ENCODE measurements at regions of chr20 and their contacts with region 1.

Region 1: DNA sequence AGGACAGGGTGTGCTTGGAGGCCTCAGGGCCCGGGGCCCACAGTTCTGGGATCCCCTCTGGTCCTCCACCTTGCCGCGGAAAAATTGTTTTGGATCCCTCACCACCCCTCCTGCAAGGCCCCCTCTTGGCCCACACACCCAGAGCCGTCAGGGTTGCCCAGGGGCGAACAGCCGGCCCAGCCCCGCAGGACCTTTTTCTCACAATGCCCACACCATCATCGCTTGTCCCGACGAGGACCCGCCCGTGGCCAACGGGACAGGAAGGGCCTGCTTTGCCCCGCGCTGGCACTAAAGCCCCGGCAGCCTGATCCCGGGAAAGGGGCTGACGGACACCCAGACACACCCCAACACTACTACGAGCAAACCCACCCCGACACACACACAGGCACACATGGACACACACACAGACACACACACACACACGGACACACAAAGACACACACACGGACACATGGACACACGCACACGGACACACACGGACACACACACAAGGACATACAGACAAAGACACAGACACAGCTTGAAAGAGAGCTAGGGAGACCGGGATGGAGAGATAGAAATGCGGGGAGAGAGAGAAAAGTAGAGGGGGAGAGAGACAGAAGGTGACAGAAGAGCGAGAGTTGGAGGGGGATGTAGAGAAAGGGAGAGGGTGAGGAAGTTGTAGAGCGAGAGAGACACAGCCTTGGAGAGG is 1493.5 kb upstream of the DEFB115 start:
- DNase-seq: no peak
- H3K4me3 ChIP-seq: no peak overlapping the region
- H3K4me3 Mint-ChIP-seq: no peak overlapping the region
- H3K27ac Mint-ChIP-seq: no peak overlapping the region
- H3K4me1 ChIP-seq: no peaks in the 10 kb centered on the region
- H3K4me1 Mint-ChIP-seq: no peaks in the 10 kb centered on the region
- H3K27me3 ChIP-seq: no peaks in the 10 kb centered on the region
- H3K27me3 Mint-ChIP-seq: no peaks in the 10 kb centered on the region
- CTCF ChIP-seq: no peak

Region 2: DNA sequence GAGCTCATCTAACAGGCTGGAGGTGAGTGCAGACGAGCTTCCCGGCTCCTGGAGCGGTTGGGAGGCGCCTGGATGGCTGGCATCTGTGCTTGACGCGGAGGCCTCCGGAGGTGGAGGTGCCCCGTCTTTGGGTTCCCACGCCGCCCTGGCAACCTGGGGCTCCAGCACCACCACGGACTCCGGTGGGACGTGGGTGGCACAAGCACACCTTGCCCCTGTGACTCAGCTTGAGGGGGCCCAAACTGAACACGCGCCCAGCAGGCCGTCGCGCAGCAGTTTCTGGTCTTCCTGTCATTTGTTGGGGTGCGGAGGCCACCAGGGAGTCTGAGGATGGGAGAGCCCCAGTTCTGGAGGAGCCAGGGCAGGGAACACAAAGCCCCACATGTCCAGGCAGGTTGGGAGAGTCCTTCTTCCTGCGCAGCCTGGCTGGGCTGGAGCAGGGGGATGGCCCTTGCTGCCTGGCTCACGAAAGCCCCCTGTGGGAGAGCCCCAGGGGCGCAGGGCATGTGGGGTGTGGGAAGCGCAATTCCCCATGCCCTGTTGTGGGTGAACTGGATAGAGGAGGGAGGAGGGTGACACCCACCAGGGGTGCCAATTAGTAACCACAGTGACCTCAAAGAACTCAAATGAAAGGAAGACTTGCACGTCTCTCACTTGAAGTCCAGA is 114.9 kb after region 1 on chr20:
- CTCF ChIA-PET with region 1: no interaction called
- POLR2A ChIA-PET with region 1: no interaction called
- intact Hi-C with region 1: loop called (anchors 1 kb)
- DNase-seq: peak in 1 of 2 experiments; percentile 34
- H3K4me3 ChIP-seq: no peak overlapping the region
- H3K4me3 Mint-ChIP-seq: no peak overlapping the region
- H3K27ac Mint-ChIP-seq: no peak overlapping the region
- H3K4me1 ChIP-seq: peaks cover 14% of the 10 kb centered on the region
- H3K4me1 Mint-ChIP-seq: peaks cover 10% of the 10 kb centered on the region
- H3K27me3 ChIP-seq: no peaks in the 10 kb centered on the region
- H3K27me3 Mint-ChIP-seq: no peaks in the 10 kb centered on the region
- CTCF ChIP-seq: no peak

Measured in Caco-2 (cell line).